ENCODE measurements at regions of chr15 and their contacts with region 1.

Region 1: GRCh38 chr15:77543159-77543882 is 89.4 kb downstream of the LINGO1 start:
- DNase-seq: peak; percentile 78
- ATAC-seq: peak; percentile 89
- H3K4me3 Mint-ChIP-seq: peak overlapping the region; percentile 83
- H3K27ac Mint-ChIP-seq: peak overlapping the region; percentile 24
- H3K4me1 Mint-ChIP-seq: peaks cover 43% of the 10 kb centered on the region
- H3K27me3 Mint-ChIP-seq: peaks cover 3% of the 10 kb centered on the region
- CTCF ChIP-seq: peak; percentile 51

Region 2: GRCh38 chr15:75584121-75584520 is 1959.2 kb before region 1 on chr15:
- CTCF ChIA-PET with region 1: no interaction called
- POLR2A ChIA-PET with region 1: no interaction called
- intact Hi-C with region 1: no loop called
- DNase-seq: no peak
- ATAC-seq: no peak
- H3K4me3 Mint-ChIP-seq: no peak overlapping the region
- H3K27ac Mint-ChIP-seq: no peak overlapping the region
- H3K4me1 Mint-ChIP-seq: peaks cover 6% of the 10 kb centered on the region
- H3K27me3 Mint-ChIP-seq: no peaks in the 10 kb centered on the region
- CTCF ChIP-seq: no peak

Region 3: DNA sequence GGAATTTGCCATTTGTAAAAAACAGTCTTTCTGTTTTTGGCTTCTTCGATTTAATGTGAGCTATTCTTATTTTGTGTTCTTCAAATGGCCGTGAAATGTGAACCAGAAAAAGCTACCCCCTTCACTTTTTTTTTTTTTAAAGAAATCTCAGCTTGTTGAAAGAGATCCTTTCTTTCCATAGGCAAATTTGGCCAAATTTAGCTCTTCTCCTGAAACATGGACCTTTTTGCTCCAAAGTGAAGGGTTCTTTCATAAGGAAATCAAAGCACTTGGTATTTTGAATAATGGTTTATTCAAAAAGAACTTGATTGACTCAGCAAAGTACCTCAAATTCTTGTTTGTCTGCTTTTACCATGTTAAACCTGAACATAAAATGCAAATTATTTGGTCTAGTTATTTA is 601.7 kb before region 1 on chr15:
- CTCF ChIA-PET with region 1: interaction called, 10 read pairs
- POLR2A ChIA-PET with region 1: no interaction called
- intact Hi-C with region 1: no loop called
- DNase-seq: no peak
- ATAC-seq: no peak
- H3K4me3 Mint-ChIP-seq: no peak overlapping the region
- H3K27ac Mint-ChIP-seq: no peak overlapping the region
- H3K4me1 Mint-ChIP-seq: peaks cover 20% of the 10 kb centered on the region
- H3K27me3 Mint-ChIP-seq: no peaks in the 10 kb centered on the region
- CTCF ChIP-seq: no peak

Region 4: DNA sequence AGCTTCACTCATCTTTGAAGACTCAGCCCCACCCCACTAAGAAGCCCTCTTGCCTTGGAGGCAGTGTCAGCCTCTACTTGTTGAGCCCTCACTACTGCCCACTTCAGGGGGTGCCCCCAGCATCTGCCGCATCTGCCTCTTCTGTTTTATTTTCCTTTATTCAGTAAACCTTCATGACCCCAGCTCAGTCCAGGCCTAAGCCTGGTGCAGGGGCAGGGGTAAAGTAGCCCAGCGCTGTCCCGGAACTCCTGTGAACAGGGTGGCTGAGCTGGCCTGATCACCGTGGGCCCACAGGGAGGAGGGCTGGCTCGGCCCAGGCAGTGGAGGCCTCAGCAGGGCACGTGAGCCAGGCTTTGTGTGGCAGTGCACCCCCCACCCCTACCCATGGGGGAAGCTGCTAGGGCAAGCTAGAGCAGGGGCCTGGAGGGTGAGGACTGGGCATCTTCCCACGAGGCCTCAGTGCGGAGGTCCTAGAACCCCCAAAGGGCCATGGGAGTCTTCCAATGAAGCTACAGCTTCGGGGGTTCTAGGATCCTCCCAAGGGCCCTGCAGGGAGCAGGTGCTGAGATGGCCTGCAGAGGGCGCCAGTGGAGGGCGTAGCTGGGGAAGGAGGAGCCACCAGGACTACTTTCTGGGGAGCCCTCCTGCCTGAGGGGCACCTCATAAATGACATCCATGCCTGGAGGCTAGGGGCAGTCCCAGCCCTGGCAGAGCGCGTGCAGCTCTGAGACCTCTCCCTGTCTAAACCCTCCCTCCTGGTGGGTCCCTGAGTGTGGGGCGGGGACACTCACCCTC is 508.4 kb before region 1 on chr15:
- CTCF ChIA-PET with region 1: interaction called, 9 read pairs
- POLR2A ChIA-PET with region 1: no interaction called
- intact Hi-C with region 1: loop called (anchors 1 kb)
- DNase-seq: peak; percentile 42
- ATAC-seq: peak; percentile 30
- H3K4me3 Mint-ChIP-seq: no peak overlapping the region
- H3K27ac Mint-ChIP-seq: peak overlapping the region; percentile 18
- H3K4me1 Mint-ChIP-seq: peaks cover 17% of the 10 kb centered on the region
- H3K27me3 Mint-ChIP-seq: no peaks in the 10 kb centered on the region
- CTCF ChIP-seq: no peak

Region 5: DNA sequence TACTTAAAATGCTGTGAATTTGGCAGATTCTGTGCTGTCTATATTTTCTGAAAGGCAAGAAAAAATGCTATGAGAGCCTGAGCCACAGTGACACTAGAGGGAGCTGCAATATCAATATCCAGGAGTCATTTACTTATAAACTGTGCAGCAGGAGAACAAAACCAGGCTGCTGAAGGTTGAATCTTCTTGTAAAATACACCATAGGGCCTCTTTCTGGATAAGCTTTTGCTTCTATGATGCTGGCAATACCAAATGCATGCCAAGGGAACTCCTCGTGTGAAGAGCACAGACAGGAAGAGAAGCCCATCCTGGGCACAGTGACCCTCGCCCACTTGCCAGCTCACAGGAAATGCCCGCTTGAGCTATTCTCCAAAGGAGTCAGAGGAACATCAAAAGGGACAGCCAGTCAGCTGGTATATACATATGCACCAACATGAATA is 424.4 kb before region 1 on chr15:
- CTCF ChIA-PET with region 1: interaction called, 146 read pairs
- POLR2A ChIA-PET with region 1: interaction called, 8 read pairs
- intact Hi-C with region 1: loop called (anchors 1 kb)
- DNase-seq: no peak
- ATAC-seq: peak; percentile 62
- H3K4me3 Mint-ChIP-seq: no peak overlapping the region
- H3K27ac Mint-ChIP-seq: no peak overlapping the region
- H3K4me1 Mint-ChIP-seq: peaks cover 40% of the 10 kb centered on the region
- H3K27me3 Mint-ChIP-seq: no peaks in the 10 kb centered on the region
- CTCF ChIP-seq: no peak

Region 6: GRCh38 chr15:77419836-77420609 is 123.3 kb before region 1 on chr15 and contains the start of gene PEAK1:
- CTCF ChIA-PET with region 1: interaction called, 5 read pairs
- POLR2A ChIA-PET with region 1: interaction called, 3 read pairs
- intact Hi-C with region 1: loop called (anchors 5 kb)
- DNase-seq: peak; percentile 98
- ATAC-seq: peak; percentile 96
- H3K4me3 Mint-ChIP-seq: peak within 1 kb of the TSS; percentile 97
- H3K27ac Mint-ChIP-seq: peak within 1 kb of the TSS; percentile 98
- H3K4me1 Mint-ChIP-seq: peaks cover 46% of the 10 kb centered on the region
- H3K27me3 Mint-ChIP-seq: no peaks in the 10 kb centered on the region
- CTCF ChIP-seq: no peak
- total RNA-seq, gene PEAK1: 31.8 and 34.2 TPM in 2 replicates

Region 7: GRCh38 chr15:77676569-77677375 is 133.5 kb after region 1 on chr15:
- CTCF ChIA-PET with region 1: no interaction called
- POLR2A ChIA-PET with region 1: no interaction called
- intact Hi-C with region 1: no loop called
- DNase-seq: no peak
- ATAC-seq: no peak
- H3K4me3 Mint-ChIP-seq: no peak overlapping the region
- H3K27ac Mint-ChIP-seq: no peak overlapping the region
- H3K4me1 Mint-ChIP-seq: no peaks in the 10 kb centered on the region
- H3K27me3 Mint-ChIP-seq: peaks cover 17% of the 10 kb centered on the region
- CTCF ChIP-seq: no peak